Endothelial cell of umbilical vein (primary cell): ENCODE measurements at regions of chr9 and their contacts with region 1.

Region 1: GRCh38 chr9:6055213-6055612 is 39.8 kb upstream of the RANBP6 start:
- DNase-seq: peak; percentile 91
- H3K4me3 ChIP-seq: no peak overlapping the region
- H3K27ac ChIP-seq: no peak overlapping the region
- H3K4me1 ChIP-seq: no peaks in the 10 kb centered on the region
- H3K27me3 ChIP-seq: no peaks in the 10 kb centered on the region
- CTCF ChIP-seq: peak; percentile 37
- POLR2A ChIP-seq: no peak

Region 2: DNA sequence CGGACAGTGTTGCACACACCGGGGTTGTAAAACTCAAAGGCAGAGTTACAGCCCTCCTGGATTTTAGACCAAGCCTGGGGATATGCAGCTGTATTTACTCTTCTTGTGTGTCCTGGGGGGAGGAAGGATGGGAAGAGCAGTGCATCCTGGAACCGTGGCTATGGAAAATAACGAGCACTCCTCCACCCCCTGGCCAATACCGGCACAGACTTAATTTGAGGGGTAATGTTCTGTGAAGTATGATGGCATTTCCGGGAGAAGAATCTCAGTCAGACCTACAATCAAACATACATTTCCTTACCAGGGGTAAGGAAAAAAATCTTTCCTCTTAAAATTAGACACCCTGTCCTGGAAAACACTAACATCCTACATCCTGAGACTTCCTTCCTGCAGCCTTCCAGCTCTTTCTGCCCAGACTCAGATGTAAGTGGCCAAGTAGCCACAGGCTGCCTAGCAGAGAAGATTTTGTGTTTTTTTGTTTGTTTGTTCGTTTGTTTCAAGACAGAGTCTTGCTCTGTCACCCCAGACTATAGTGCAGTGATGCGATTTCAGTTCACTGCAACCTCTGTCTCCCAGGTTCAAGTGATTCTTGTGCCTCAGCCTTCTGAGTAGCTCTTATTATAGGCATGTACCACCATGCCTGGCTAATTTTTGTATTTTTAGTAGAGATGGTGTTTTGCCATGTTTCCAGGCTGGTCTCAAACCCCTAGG is 211.3 kb before region 1 on chr9:
- CTCF ChIA-PET with region 1: interaction called, 13 read pairs
- POLR2A ChIA-PET with region 1: no interaction called
- dilution Hi-C with region 1: no loop called
- intact Hi-C with region 1: no loop called
- DNase-seq: peak; percentile 61
- H3K4me3 ChIP-seq: peak overlapping the region in 1 of 3 experiments; percentile 26
- H3K27ac ChIP-seq: peak overlapping the region; percentile 83
- H3K4me1 ChIP-seq: peaks cover 39% of the 10 kb centered on the region
- H3K27me3 ChIP-seq: no peaks in the 10 kb centered on the region
- CTCF ChIP-seq: no peak
- POLR2A ChIP-seq: peak; percentile 60

Region 3: GRCh38 chr9:6008169-6008979 is 46.8 kb before region 1 on chr9:
- CTCF ChIA-PET with region 1: interaction called, 19 read pairs
- POLR2A ChIA-PET with region 1: no interaction called
- dilution Hi-C with region 1: no loop called
- intact Hi-C with region 1: no loop called
- DNase-seq: peak; percentile 98
- H3K4me3 ChIP-seq: peak overlapping the region; percentile 65 to 98 (median 89)
- H3K27ac ChIP-seq: peak overlapping the region; percentile 60
- H3K4me1 ChIP-seq: peaks cover 22% of the 10 kb centered on the region
- H3K27me3 ChIP-seq: no peaks in the 10 kb centered on the region
- CTCF ChIP-seq: no peak
- POLR2A ChIP-seq: peak; percentile 50

Region 4: DNA sequence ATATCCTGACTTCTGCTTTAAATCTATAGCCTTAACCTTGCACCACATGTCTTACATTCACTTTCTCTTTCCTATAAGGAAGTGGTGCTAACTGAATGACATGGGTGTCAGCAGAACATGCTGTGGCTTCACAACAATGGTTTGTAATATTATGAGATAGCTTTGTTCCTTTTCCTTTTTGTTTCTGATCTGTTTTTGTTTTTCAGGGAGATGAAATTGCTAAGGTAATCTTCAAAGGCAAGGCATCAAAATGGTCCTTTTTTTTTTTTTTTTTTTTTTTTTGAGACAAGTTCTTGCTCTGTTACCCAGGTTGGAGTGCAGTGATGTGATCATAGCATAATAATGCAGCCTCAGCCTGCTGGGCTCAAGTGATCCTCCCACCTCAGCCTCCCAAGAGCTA is 13.8 kb after region 1 on chr9:
- CTCF ChIA-PET with region 1: interaction called, 12 read pairs
- POLR2A ChIA-PET with region 1: no interaction called
- dilution Hi-C with region 1: no loop called
- intact Hi-C with region 1: no loop called
- DNase-seq: no peak
- H3K4me3 ChIP-seq: no peak overlapping the region
- H3K27ac ChIP-seq: no peak overlapping the region
- H3K4me1 ChIP-seq: no peaks in the 10 kb centered on the region
- H3K27me3 ChIP-seq: peaks cover 2 to 11% of the 10 kb centered on the region in 2 experiments
- CTCF ChIP-seq: no peak
- POLR2A ChIP-seq: no peak

Region 5: DNA sequence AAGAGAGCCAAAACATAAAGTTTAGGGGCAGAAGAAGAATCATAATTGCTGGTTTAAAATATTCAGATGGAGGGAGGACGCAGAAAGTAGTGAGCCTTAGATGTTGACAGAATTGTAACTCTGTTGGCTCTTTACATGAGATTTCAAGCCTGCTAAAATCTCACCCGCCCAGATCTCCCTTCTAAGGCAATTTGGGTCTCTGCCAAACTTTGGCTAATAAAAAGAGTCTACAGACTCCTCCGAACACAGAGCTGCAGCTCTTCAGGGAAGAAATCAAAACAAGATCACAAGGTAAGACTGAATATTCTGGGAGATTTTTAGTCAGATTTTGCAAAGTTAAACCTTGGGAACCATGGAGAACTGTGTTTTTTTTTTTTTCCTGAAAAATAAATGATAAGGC is 160.3 kb after region 1 on chr9 and contains the start of gene IL33:
- CTCF ChIA-PET with region 1: interaction called, 17 read pairs
- POLR2A ChIA-PET with region 1: no interaction called
- dilution Hi-C with region 1: no loop called
- intact Hi-C with region 1: no loop called
- DNase-seq: peak; percentile 72
- H3K4me3 ChIP-seq: peak within 1 kb of the TSS in 1 of 3 experiments; percentile 42
- H3K27ac ChIP-seq: no peak within 1 kb of the TSS
- H3K4me1 ChIP-seq: peaks cover 32% of the 10 kb centered on the region
- H3K27me3 ChIP-seq: no peaks in the 10 kb centered on the region
- CTCF ChIP-seq: no peak
- POLR2A ChIP-seq: no peak
- total RNA-seq, gene IL33: 8.5 and 13.8 TPM in 2 replicates

Region 6: GRCh38 chr9:6488395-6488794 is 433.2 kb after region 1 on chr9:
- CTCF ChIA-PET with region 1: no interaction called
- POLR2A ChIA-PET with region 1: no interaction called
- dilution Hi-C with region 1: no loop called
- intact Hi-C with region 1: loop called (anchors 10 kb)
- DNase-seq: no peak
- H3K4me3 ChIP-seq: no peak overlapping the region
- H3K27ac ChIP-seq: no peak overlapping the region
- H3K4me1 ChIP-seq: no peaks in the 10 kb centered on the region
- H3K27me3 ChIP-seq: no peaks in the 10 kb centered on the region
- CTCF ChIP-seq: no peak
- POLR2A ChIP-seq: no peak